K562 (cell line): ENCODE measurements at regions of chr9 and their contacts with region 1.

Region 1: GRCh38 chr9:112135706-112136105 is 39.4 kb downstream of the SUSD1 start:
- DNase-seq: peak in 1 of 4 experiments; percentile 15
- ATAC-seq: 0 out of 3 replicates have a peak, but pooled peaks have one; percentile 28
- H3K4me3 ChIP-seq: no peak overlapping the region
- H3K27ac ChIP-seq: no peak overlapping the region
- H3K4me1 ChIP-seq: no peaks in the 10 kb centered on the region
- H3K27me3 ChIP-seq: no peaks in the 10 kb centered on the region
- CTCF ChIP-seq: no peak
- EP300 ChIP-seq: no peak
- POLR2A ChIP-seq: no peak
- RAD21 ChIP-seq: no peak

Region 2: DNA sequence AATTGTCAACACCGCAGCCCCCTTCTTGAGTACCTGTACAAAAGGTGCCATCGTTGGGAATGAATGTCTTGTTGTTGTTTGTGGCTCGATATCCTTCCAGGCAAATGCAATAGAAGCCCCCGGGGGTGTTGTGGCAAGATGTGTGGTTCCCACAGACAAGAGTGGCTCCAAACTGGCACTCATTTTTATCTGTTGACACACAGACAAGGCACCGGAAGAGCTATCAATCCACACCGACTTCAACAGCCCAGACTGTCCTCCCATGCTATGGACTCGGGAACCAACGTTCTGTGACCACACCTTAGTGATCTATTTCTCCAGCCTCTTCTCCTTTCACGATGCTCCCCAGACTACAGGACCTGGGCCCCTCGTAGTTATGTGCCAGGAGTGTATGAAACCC is 13.5 kb after region 1 on chr9:
- CTCF ChIA-PET with region 1: no interaction called
- POLR2A ChIA-PET with region 1: interaction called, 18 read pairs
- in situ Hi-C with region 1: no loop called
- intact Hi-C with region 1: no loop called
- DNase-seq: no peak
- ATAC-seq: no peak; the same call in 2 of the 3 replicates
- H3K4me3 ChIP-seq: no peak overlapping the region
- H3K27ac ChIP-seq: no peak overlapping the region
- H3K4me1 ChIP-seq: no peaks in the 10 kb centered on the region
- H3K27me3 ChIP-seq: no peaks in the 10 kb centered on the region
- CTCF ChIP-seq: no peak
- EP300 ChIP-seq: no peak
- POLR2A ChIP-seq: no peak
- RAD21 ChIP-seq: no peak